Esophagus muscularis mucosa (tissue), 4 donors: ENCODE measurements at regions of chr7 and their contacts with region 1.

Region 1: GRCh38 chr7:44490351-44491200 is at the start of gene NUDCD3:
- DNase-seq: peak; percentile 97
- H3K4me3 ChIP-seq: peak within 1 kb of the TSS; percentile 65 to 89 (median 80)
- H3K27ac ChIP-seq: peak within 1 kb of the TSS; percentile 93 to 97 (median 96)
- H3K4me1 ChIP-seq: peaks cover 37 to 48% (median 45%) of the 10 kb centered on the region in 4 donors
- H3K27me3 ChIP-seq: peaks cover 0 to 3% (median 0%) of the 10 kb centered on the region in 4 donors
- CTCF ChIP-seq: peak in 2 of 3 experiments; percentile 5 to 28
- EP300 ChIP-seq: no peak
- POLR2A ChIP-seq: peak; percentile 58
- total RNA-seq, gene NUDCD3: 44.9 to 92.4 (median 73.0) TPM

Region 2: DNA sequence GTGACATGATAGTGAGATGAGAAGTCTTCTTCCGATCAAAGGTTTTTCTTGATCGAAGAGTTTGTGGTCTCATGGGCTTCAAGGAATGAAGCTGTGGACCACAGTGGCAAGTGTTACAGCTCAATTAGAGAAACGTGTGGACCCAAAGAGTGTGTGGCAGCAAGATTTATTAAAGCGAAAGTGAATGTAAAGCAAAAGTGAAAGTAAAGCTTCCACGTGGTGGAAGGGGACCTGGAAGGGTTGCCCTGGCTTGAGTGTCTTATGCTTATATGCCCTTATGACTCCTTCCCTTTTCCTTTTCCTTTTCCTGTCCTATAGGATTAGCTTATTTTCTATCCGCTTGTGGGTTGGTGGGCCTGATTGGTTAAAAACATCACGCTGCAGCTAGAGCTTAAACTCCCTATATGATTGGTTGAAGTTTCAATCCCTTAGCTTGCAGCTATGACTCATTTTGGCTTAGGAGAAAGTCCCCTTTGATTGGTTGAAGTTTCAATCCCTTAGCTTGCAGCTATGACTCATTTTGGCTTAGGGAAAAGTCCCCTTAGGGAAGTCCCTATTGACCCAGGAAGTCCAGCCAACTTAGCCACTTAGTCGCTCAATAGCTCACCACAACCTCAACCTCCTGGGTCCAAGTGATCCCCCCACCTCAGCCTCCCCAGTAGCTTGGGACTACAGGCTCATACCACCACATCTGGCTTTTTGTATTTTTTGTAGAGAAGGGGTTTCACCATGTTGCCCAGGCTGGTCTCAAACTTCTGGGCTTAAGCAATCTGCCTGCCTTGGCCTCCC is 655.9 kb before region 1 on chr7:
- intact Hi-C with region 1: no loop called
- DNase-seq: no peak
- H3K4me3 ChIP-seq: peak overlapping the region; percentile 16 to 34 (median 24)
- H3K27ac ChIP-seq: no peak overlapping the region
- H3K4me1 ChIP-seq: peaks cover 4 to 12% (median 8%) of the 10 kb centered on the region in 4 donors
- H3K27me3 ChIP-seq: no peaks in the 10 kb centered on the region
- CTCF ChIP-seq: no peak
- EP300 ChIP-seq: no peak
- POLR2A ChIP-seq: no peak

Region 3: DNA sequence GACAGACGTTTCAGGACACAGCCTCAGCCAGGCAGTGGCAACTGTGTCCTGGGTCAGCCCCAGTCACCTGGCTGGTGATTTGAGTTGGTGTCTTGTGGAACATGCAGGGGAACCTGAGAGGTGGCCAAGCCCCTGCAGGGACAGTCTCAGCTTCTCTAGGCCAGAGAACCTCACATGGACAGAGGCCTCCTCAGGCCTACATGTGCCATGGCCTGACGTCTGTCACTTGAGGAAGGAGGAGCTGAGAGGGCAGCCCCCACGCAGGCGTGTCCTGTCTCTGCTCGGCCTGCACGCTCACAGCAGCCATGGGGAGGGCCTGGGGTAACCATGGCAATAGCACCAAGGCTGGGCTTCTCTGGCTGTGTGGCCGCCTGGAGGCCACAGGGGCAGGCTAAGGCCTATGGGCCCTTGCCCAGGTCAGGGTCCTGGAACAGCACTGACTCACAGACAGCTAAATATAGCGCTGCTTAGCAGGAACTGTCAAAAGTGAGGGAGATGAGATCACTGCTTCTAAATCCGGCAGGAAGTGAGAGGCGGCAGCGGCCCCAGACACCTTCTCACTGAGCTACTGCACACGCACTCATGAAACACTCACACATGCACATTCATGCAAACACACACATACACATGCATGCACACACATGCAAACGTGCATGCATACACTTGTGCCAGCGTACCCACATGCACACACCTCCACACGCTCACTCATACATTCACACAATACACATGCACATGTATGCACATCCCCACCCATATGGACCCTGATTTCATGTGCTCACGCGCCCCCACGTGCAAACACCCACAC is 232.8 kb before region 1 on chr7:
- intact Hi-C with region 1: loop called (anchors 5 kb)
- DNase-seq: peak; percentile 93
- H3K4me3 ChIP-seq: no peak overlapping the region
- H3K27ac ChIP-seq: peak overlapping the region; percentile 70 to 83 (median 74)
- H3K4me1 ChIP-seq: peaks cover 40 to 64% (median 46%) of the 10 kb centered on the region in 4 donors
- H3K27me3 ChIP-seq: no peaks in the 10 kb centered on the region
- CTCF ChIP-seq: no peak
- EP300 ChIP-seq: no peak
- POLR2A ChIP-seq: no peak

Region 4: GRCh38 chr7:44530990-44531389 is 40.4 kb after region 1 on chr7:
- intact Hi-C with region 1: no loop called
- DNase-seq: no peak
- H3K4me3 ChIP-seq: no peak overlapping the region
- H3K27ac ChIP-seq: no peak overlapping the region
- H3K4me1 ChIP-seq: no peaks in the 10 kb centered on the region
- H3K27me3 ChIP-seq: no peaks in the 10 kb centered on the region
- CTCF ChIP-seq: no peak
- EP300 ChIP-seq: no peak
- POLR2A ChIP-seq: no peak

Region 5: DNA sequence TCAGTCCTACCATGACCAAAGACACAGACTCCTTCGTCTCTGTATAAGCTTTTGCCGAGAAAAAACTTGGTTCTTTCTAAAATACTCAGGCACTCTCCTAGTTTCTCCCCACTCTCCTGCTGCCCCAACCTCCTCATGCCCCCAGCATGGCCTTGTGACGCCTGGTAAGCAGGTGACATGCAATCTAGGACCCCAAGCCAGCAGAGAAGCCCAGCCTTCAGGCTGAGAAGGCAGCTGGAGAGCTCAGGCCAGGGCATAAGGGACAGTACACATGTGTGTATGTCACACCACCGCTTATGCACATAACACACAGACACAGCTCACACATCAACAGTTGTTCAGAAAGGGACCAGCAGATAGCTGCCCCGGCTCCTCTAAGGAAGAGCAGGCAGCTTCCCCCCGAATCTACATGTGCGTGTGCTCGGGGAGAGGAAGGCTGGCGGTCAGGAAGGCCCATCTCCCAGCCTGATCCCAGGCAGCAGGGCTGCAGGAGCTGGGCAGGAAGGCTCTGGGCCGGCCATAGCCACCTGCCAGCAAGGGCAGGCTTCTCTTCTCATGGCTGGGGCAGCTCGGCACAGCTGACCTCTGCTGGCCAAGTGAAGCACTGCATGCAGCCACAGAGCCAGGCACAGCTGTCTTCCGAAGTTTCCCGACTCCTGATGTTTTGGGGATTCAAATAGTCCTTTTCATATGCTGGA is 74.7 kb after region 1 on chr7:
- intact Hi-C with region 1: loop called (anchors 2 kb)
- DNase-seq: no peak
- H3K4me3 ChIP-seq: no peak overlapping the region
- H3K27ac ChIP-seq: peak overlapping the region in 2 of 4 donors; percentile 19 to 34
- H3K4me1 ChIP-seq: peaks cover 4 to 17% (median 11%) of the 10 kb centered on the region in 4 donors
- H3K27me3 ChIP-seq: no peaks in the 10 kb centered on the region
- CTCF ChIP-seq: peak in 2 of 3 experiments; percentile 93 to 94
- EP300 ChIP-seq: no peak
- POLR2A ChIP-seq: no peak